ENCODE measurements at regions of chr5 and their contacts with region 1.

Region 1: DNA sequence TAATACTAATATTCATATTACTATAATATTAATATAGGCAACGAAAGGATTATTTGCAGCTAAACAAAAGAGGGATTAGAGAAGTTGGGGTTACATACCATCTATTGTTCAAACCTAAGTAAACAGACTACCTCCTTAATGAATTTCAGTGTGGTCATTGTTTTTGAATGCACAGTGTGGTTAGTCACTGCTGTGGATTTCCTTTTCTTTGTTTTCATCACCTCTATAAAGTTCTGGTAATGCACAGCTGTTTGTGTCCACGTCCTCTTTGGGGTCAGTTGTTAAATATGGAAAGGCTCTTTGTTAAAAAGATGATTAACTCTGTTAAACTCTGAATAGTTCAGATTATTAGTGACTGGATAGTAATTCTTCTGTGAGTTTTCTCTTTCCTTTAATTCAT is 233.6 kb downstream of the MAST4 start:
- DNase-seq: no peak
- H3K4me3 ChIP-seq: no peak overlapping the region
- H3K27ac ChIP-seq: no peak overlapping the region
- H3K4me1 ChIP-seq: peaks cover 0 to 20% (median 5%) of the 10 kb centered on the region in 4 donors
- H3K27me3 ChIP-seq: peaks cover 4% of the 10 kb centered on the region
- CTCF ChIP-seq: no peak
- EP300 ChIP-seq: no peak
- POLR2A ChIP-seq: no peak

Region 2: GRCh38 chr5:67209142-67209771 is 379.4 kb after region 1 on chr5:
- in situ Hi-C with region 1: no loop called
- intact Hi-C with region 1: no loop called
- DNase-seq: peak; percentile 64
- H3K4me3 ChIP-seq: no peak overlapping the region
- H3K27ac ChIP-seq: no peak overlapping the region
- H3K4me1 ChIP-seq: peaks cover 0 to 38% (median 6%) of the 10 kb centered on the region in 4 donors
- H3K27me3 ChIP-seq: no peaks in the 10 kb centered on the region
- CTCF ChIP-seq: peak; percentile 72 to 87 (median 74)
- EP300 ChIP-seq: no peak
- POLR2A ChIP-seq: no peak

Region 3: GRCh38 chr5:67591491-67591890 is 761.7 kb after region 1 on chr5:
- in situ Hi-C with region 1: no loop called
- intact Hi-C with region 1: loop called (anchors 10 kb)
- DNase-seq: no peak
- H3K4me3 ChIP-seq: no peak overlapping the region
- H3K27ac ChIP-seq: no peak overlapping the region
- H3K4me1 ChIP-seq: no peaks in the 10 kb centered on the region
- H3K27me3 ChIP-seq: no peaks in the 10 kb centered on the region
- CTCF ChIP-seq: no peak
- EP300 ChIP-seq: no peak
- POLR2A ChIP-seq: no peak

Measured in transverse colon (tissue), 4 donors.